ENCODE measurements at regions of chr2 and their contacts with region 1.

Region 1: GRCh38 chr2:223169830-223170605 is 118.0 kb downstream of the KCNE4 start:
- DNase-seq: no peak
- H3K4me3 ChIP-seq: no peak overlapping the region
- H3K27ac ChIP-seq: no peak overlapping the region
- H3K4me1 ChIP-seq: no peaks in the 10 kb centered on the region
- H3K27me3 ChIP-seq: no peaks in the 10 kb centered on the region
- CTCF ChIP-seq: no peak
- EP300 ChIP-seq: no peak
- POLR2A ChIP-seq: no peak

Region 2: GRCh38 chr2:223549215-223549614 is 379.2 kb after region 1 on chr2:
- intact Hi-C with region 1: loop called (anchors 10 kb)
- DNase-seq: no peak
- H3K4me3 ChIP-seq: no peak overlapping the region
- H3K27ac ChIP-seq: no peak overlapping the region
- H3K4me1 ChIP-seq: no peaks in the 10 kb centered on the region
- H3K27me3 ChIP-seq: no peaks in the 10 kb centered on the region
- CTCF ChIP-seq: no peak
- EP300 ChIP-seq: no peak
- POLR2A ChIP-seq: no peak